ENCODE measurements at regions of chr17 and their contacts with region 1.

Region 1: DNA sequence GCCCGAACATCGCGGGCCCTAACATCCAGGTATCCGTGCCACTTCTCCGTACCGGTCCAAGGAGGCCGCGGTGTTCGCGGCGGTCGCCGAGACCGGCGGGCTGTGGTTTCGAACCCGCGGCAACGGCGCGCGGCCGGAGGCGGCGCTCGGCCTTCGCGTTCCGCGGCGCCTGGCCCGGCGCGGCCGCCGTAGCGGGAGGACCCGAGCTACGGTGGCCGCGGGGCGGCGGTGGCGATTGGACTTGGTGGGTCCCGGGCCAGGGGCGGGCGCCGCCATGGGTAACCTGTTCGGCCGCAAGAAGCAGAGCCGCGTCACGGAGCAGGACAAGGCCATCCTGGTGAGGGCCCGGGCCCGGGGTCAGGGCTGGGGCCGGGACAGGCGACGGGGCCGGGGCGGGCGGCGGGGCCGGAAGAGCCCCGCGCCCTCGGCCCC is at the start of gene CHMP6:
- DNase-seq: peak; percentile 79 to 93
- H3K4me3 ChIP-seq: peak within 1 kb of the TSS; percentile 96 to 100 (median 100)
- H3K27ac ChIP-seq: peak within 1 kb of the TSS in 4 of 5 donors; percentile 18 to 88 (median 78)
- H3K4me1 ChIP-seq: peaks cover 22 to 62% (median 46%) of the 10 kb centered on the region in 4 donors
- H3K27me3 ChIP-seq: no peaks in the 10 kb centered on the region
- CTCF ChIP-seq: peak in 3 of 7 experiments; percentile 8 to 41 (median 8)
- EP300 ChIP-seq: no peak
- POLR2A ChIP-seq: no peak
- total RNA-seq, gene CHMP6: 5.4 to 117 (median 12.9) TPM

Region 2: GRCh38 chr17:81101614-81102306 is 110.1 kb after region 1 on chr17:
- intact Hi-C with region 1: loop called (anchors 10 kb)
- DNase-seq: peak; percentile 88 to 93
- H3K4me3 ChIP-seq: no peak overlapping the region
- H3K27ac ChIP-seq: no peak overlapping the region
- H3K4me1 ChIP-seq: peaks cover 13 to 32% (median 26%) of the 10 kb centered on the region in 4 donors
- H3K27me3 ChIP-seq: no peaks in the 10 kb centered on the region
- CTCF ChIP-seq: peak in 6 of 7 experiments; percentile 54 to 100 (median 99)
- EP300 ChIP-seq: no peak
- POLR2A ChIP-seq: no peak